ENCODE measurements at regions of chr11 and their contacts with region 1.

Region 1: DNA sequence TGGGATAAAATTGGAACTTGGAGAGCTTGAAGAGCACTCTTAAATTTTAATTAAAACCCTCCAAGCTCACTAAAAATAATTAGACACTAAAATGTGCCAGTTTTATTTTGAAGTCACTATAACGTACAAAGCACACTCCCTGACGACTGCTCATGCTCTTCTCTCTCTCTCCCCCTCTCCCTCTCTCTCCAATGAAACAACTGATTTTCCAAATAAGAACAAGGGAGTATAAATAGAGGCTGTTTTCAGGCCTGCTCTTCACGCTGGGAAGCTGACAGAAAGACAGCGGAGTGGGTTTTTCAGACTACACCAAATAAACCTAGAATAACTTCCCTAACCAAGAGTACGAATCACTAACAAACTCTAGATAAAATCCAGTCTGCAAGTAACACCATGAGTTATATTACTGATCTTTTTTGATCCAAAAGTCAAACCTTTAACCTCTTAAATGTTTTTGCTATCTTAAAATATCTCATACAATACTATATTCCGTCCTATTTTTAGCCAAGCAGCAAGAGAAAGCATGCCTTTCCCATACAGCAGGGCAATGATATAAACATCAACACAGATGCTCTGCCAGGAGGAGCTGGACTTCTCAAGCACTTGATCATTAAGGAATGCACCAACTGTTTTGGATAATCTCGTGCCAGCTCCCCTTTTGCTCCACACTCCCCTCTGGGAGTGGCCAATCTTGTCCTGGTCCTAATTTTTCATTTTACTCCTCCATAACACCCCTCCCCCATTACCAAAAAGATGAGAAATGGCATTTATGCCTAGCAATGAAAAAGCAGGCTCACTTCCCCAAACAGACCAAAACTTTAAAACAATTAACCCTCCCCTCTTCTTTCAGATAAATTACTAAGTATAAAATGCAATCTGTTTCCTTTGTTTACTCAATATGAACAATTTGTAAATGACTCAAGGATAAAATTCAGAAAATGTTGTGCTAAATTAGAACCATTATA is 116.9 kb downstream of the SOX6 start:
- DNase-seq: peak; percentile 48
- ATAC-seq: peak; percentile 84
- H3K4me3 ChIP-seq: no peak overlapping the region
- H3K27ac ChIP-seq: no peak overlapping the region; the same call in 1 of the 2 replicates
- H3K4me1 ChIP-seq: peaks cover 8% of the 10 kb centered on the region; the same call in 1 of the 2 replicates
- H3K27me3 ChIP-seq: no peaks in the 10 kb centered on the region
- CTCF ChIP-seq: no peak
- POLR2A ChIP-seq: no peak
- RAD21 ChIP-seq: no peak

Region 2: GRCh38 chr11:16191212-16191867 is 48.1 kb before region 1 on chr11:
- CTCF ChIA-PET with region 1: no interaction called
- POLR2A ChIA-PET with region 1: no interaction called
- dilution Hi-C with region 1: no loop called
- in situ Hi-C with region 1: no loop called
- intact Hi-C with region 1: loop called (anchors 5 kb)
- DNase-seq: peak; percentile 18
- ATAC-seq: no peak
- H3K4me3 ChIP-seq: no peak overlapping the region
- H3K27ac ChIP-seq: no peak overlapping the region
- H3K4me1 ChIP-seq: peaks cover 5% of the 10 kb centered on the region
- H3K27me3 ChIP-seq: no peaks in the 10 kb centered on the region
- CTCF ChIP-seq: no peak
- POLR2A ChIP-seq: no peak
- RAD21 ChIP-seq: no peak

Region 3: DNA sequence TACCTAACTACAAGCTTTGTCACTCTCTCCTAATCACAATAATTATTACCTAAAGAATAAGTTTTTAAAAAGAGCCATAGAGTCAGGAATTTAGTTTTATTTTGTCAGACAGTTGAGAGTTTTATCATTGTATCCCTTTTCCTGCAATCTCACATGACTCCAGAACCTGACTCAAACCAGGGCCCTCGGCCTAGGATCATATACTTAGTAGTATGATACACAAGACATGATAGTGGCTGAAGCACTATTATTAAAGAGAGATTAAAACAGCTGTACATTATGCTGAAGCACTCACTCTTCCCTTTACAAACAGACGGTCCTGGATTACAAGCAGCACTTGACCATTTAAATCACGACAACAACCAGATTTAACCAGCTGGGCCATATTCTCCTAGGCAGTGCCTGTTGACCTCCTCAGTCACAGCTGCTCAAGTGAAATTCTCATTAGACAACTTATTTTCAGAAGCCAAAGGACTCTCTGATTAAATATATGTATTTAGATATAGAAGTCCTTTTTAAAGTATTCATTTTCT is 72.9 kb after region 1 on chr11:
- CTCF ChIA-PET with region 1: no interaction called
- POLR2A ChIA-PET with region 1: no interaction called
- dilution Hi-C with region 1: no loop called
- in situ Hi-C with region 1: no loop called
- intact Hi-C with region 1: no loop called
- DNase-seq: no peak
- ATAC-seq: no peak
- H3K4me3 ChIP-seq: no peak overlapping the region
- H3K27ac ChIP-seq: no peak overlapping the region
- H3K4me1 ChIP-seq: no peaks in the 10 kb centered on the region
- H3K27me3 ChIP-seq: no peaks in the 10 kb centered on the region
- CTCF ChIP-seq: no peak
- POLR2A ChIP-seq: no peak
- RAD21 ChIP-seq: no peak

Region 4: DNA sequence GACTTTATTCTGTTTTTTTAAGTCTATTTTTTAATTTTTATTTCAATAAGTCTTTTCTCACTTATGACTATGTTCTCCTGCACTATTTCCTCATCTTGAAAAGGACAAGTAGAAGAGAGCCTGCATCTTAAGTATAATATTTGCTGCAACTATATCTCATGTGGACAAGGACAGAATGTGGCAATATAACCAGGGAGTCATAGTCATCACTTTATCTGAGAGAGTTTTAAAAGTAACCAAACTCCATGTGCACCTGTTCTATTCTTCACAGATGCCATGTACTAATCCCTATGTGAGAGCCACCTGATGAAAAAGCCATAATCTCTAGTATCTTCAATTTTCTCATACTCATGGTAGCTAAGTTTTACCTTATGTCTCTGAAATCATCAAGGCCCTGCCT is 221.1 kb after region 1 on chr11:
- CTCF ChIA-PET with region 1: no interaction called
- POLR2A ChIA-PET with region 1: no interaction called
- dilution Hi-C with region 1: no loop called
- in situ Hi-C with region 1: no loop called
- intact Hi-C with region 1: no loop called
- DNase-seq: no peak
- ATAC-seq: no peak
- H3K4me3 ChIP-seq: no peak overlapping the region
- H3K27ac ChIP-seq: no peak overlapping the region
- H3K4me1 ChIP-seq: 0 out of 2 replicates have a peak, but pooled peaks cover 2% of the 10 kb centered on the region
- H3K27me3 ChIP-seq: no peaks in the 10 kb centered on the region
- CTCF ChIP-seq: no peak
- POLR2A ChIP-seq: no peak
- RAD21 ChIP-seq: no peak